ENCODE measurements at regions of chr20 and their contacts with region 1.

Region 1: DNA sequence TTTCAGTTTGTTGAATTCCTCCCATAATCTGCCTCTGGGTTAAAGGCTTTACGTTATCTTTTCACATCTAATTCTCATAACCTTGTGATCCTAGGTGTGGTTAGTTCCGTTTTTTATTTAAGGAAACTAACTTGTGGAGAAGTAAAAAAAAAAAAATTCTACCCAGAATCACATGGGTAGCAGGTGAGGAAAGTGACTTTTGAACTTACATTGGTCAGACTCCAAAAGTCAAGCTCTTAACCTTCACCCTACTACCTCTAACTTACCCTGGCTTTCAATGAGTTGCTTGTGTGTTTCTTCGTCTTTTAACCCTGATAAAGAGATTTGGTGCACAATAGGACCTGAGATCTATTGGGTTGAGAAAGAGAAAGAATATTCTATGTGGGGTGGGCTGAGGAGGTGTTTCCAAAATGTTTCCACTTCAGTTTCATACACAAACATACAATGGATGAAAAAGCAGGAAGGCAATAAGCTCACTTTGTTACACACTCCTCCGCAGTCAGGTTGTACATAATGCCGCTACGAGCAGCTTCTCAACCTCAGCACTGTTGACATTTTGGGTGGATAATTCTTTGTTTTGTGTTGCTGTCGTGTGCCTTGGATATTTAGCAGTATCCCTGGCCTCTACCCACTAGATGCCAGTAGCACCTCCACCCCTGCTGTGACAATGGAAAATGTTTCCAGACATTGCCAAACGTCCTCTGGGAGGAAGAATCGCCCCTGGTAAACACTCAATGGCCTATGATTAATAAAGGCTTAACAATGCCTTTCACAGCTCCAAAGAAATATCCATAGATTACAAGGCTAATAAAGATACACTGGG is 193.0 kb upstream of the ZNF217 start:
- DNase-seq: no peak
- H3K4me3 ChIP-seq: no peak overlapping the region
- H3K4me3 Mint-ChIP-seq: no peak overlapping the region
- H3K27ac ChIP-seq: no peak overlapping the region
- H3K27ac Mint-ChIP-seq: peak overlapping the region in 3 of 8 donors; percentile 18 to 54 (median 19)
- H3K4me1 ChIP-seq: no peaks in the 10 kb centered on the region
- H3K4me1 Mint-ChIP-seq: peaks cover 0 to 10% (median 2%) of the 10 kb centered on the region in 3 donors
- H3K27me3 ChIP-seq: no peaks in the 10 kb centered on the region
- H3K27me3 Mint-ChIP-seq: no peaks in the 10 kb centered on the region

Region 2: DNA sequence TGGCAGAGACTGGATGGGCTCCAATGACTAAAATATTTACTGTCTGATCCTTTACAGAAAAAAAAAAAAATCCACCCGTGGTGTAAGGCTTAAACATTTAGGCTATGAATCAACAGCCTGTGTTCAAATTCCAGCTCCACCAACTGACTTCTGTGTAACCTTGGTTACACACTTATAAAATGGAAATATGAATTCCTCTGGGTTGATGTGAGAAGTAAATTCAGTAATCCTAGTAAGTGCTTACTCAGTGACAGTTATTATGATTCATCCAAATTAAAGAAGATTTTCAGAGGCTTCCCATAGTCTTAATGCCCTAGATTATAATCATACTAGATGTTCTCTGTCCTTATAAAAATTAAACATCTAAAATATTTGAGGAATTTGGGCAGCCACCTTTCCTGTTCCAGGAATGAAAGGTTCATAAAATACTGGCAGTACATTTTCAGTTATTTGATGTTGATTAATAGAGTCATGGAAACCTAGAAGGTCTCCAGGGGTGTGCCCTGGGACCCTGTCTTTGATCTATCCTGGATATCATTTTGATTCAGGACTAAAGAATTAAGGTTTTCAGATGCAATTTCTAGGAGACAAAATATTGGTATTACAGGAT is 12.8 kb before region 1 on chr20:
- CTCF ChIA-PET with region 1: no interaction called
- POLR2A ChIA-PET with region 1: no interaction called
- DNase-seq: no peak
- H3K4me3 ChIP-seq: no peak overlapping the region
- H3K4me3 Mint-ChIP-seq: no peak overlapping the region
- H3K27ac ChIP-seq: no peak overlapping the region
- H3K27ac Mint-ChIP-seq: no peak overlapping the region
- H3K4me1 ChIP-seq: no peaks in the 10 kb centered on the region
- H3K4me1 Mint-ChIP-seq: no peaks in the 10 kb centered on the region
- H3K27me3 ChIP-seq: no peaks in the 10 kb centered on the region
- H3K27me3 Mint-ChIP-seq: peaks cover 0 to 2% of the 10 kb centered on the region in 2 donors

Region 3: GRCh38 chr20:53823121-53823764 is 36.6 kb after region 1 on chr20:
- CTCF ChIA-PET with region 1: no interaction called
- POLR2A ChIA-PET with region 1: interaction called, 16 read pairs
- DNase-seq: no peak
- H3K4me3 ChIP-seq: no peak overlapping the region
- H3K4me3 Mint-ChIP-seq: no peak overlapping the region
- H3K27ac ChIP-seq: no peak overlapping the region
- H3K27ac Mint-ChIP-seq: peak overlapping the region in 1 of 8 donors; percentile 72
- H3K4me1 ChIP-seq: peaks cover 6% of the 10 kb centered on the region
- H3K4me1 Mint-ChIP-seq: peaks cover 15 to 40% (median 30%) of the 10 kb centered on the region in 3 donors
- H3K27me3 ChIP-seq: no peaks in the 10 kb centered on the region
- H3K27me3 Mint-ChIP-seq: no peaks in the 10 kb centered on the region